Sigmoid colon (tissue), 7 donors: ENCODE measurements at regions of chr2 and their contacts with region 1.

Region 1: DNA sequence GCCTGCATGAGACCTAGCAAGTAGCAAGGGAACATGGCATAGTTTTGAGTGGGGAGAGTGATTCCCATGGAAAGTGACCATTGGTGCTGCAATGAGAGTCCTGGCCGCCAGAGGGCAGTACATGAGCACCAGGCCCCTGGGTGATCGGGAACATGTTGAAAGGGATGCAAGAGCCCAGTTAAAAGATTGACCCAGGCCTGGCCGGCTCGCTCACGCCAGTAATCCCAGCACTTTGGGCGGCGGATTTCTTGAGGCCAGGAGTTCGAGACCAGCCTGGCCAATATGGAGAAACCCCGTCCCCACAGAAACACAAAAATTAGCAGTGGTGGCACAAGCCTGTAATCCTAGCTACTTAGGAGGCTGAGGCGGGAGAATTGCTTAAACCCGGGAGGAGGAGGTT is 22.2 kb downstream of the FAP start:
- DNase-seq: peak; percentile 84
- H3K4me3 ChIP-seq: no peak overlapping the region
- H3K27ac ChIP-seq: no peak overlapping the region
- H3K4me1 ChIP-seq: no peaks in the 10 kb centered on the region
- H3K27me3 ChIP-seq: no peaks in the 10 kb centered on the region
- CTCF ChIP-seq: peak; percentile 54 to 91 (median 84)
- EP300 ChIP-seq: no peak
- POLR2A ChIP-seq: no peak

Region 2: DNA sequence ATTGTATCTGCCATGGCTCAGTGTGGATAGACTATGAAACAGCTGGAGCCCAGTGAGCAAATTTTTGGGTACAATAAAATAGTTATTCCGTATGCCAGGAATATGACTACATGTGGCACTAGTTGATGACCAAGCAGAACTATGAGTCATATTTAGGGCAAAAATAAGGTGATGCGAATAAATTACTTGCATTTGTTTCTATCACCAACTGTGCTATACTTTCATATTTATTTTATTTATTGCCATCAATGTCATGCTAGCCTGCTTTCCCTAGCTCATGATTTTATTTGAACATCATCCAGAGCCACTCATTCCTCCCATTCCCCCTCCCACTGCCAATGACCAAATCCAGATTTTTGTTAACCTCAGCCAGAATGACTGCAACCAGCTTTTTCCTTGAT is 35.5 kb after region 1 on chr2:
- intact Hi-C with region 1: loop called (anchors 5 kb)
- DNase-seq: no peak
- H3K4me3 ChIP-seq: no peak overlapping the region
- H3K27ac ChIP-seq: peak overlapping the region in 3 of 4 donors; percentile 36 to 70 (median 54)
- H3K4me1 ChIP-seq: peaks cover 0 to 28% (median 19%) of the 10 kb centered on the region in 4 donors
- H3K27me3 ChIP-seq: no peaks in the 10 kb centered on the region
- CTCF ChIP-seq: no peak
- EP300 ChIP-seq: no peak
- POLR2A ChIP-seq: no peak

Region 3: DNA sequence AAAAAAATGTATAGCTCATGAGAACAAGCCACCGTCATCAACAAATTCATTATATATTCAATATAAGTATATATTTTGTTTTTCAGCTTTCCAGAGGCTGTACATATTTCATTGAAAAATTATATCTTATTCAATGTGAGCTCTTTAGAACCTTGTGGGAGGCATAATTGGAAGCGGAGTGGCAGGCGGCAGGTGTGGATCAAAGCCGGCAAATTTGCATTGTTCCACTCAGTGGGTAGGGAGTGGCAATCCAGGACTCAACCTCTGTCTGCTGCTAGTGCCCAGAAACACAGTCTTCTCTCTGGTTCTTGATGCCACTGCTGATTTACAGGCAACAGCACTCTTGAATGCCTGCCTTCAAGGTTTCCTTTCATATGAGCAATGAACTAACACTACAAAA is 169.7 kb after region 1 on chr2:
- intact Hi-C with region 1: no loop called
- DNase-seq: no peak
- H3K4me3 ChIP-seq: no peak overlapping the region
- H3K27ac ChIP-seq: no peak overlapping the region
- H3K4me1 ChIP-seq: no peaks in the 10 kb centered on the region
- H3K27me3 ChIP-seq: no peaks in the 10 kb centered on the region
- CTCF ChIP-seq: no peak
- EP300 ChIP-seq: no peak
- POLR2A ChIP-seq: no peak